ENCODE measurements at regions of chr11 and their contacts with region 1.

Region 1: GRCh38 chr11:3341298-3341697 is 37.6 kb downstream of the ZNF195 start:
- DNase-seq: peak; percentile 67
- ATAC-seq: peak in 1 of 2 donors; percentile 58
- H3K4me3 ChIP-seq: no peak overlapping the region
- H3K27ac ChIP-seq: no peak overlapping the region
- H3K4me1 ChIP-seq: no peaks in the 10 kb centered on the region
- H3K27me3 ChIP-seq: no peaks in the 10 kb centered on the region
- CTCF ChIP-seq: peak; percentile 74

Region 2: DNA sequence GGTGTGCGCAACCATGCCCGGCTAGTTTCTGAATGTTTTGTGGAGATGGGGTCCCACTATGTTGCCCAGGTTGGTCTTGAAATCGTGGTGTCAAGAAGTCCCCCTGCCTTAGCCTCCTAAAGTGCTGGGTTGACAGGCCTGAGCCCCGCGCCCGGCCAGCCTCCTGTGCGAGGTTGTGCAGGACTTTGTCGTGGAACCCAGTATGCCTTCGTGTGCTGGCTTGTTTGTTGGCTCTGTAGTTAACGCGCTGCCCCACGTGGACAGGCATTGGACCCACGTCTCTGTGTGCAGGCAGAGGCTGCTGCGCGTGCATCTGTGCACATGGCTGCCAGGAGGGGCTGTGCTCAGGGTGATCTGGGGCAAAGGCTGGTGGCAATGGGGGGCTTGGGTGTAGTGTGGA is 71.5 kb after region 1 on chr11:
- intact Hi-C with region 1: loop called (anchors 10 kb)
- DNase-seq: no peak
- ATAC-seq: no peak
- H3K4me3 ChIP-seq: no peak overlapping the region
- H3K27ac ChIP-seq: no peak overlapping the region
- H3K4me1 ChIP-seq: no peaks in the 10 kb centered on the region
- H3K27me3 ChIP-seq: no peaks in the 10 kb centered on the region
- CTCF ChIP-seq: no peak